Spleen (tissue), 13 donors: ENCODE measurements at regions of chr10 and their contacts with region 1.

Region 1: DNA sequence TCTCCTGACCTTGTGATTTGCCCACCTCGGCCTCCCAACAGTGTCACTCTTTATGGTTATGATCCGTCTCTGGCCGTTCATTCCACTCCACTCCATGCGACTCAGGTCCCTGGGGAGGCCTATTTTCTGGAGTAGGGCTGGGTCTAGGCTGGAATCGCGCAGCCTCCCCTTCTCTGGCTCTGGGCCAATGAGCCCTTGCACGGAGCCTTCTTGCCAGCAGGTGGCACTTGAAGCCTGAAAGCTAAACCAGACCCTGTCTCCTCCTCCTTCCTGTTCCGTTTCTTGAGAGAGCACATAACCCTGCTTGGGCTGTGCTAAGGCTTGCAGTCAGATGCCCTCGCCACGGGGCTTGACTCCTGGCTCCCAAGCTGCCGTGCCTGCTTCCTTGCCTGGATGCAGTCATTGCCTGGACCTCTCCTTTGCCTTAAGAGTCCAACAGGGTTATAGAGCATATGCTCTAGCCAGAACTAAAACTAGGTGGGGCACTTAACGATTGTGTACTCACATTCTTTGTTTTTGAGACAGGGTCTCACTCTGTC is 9.6 kb upstream of the DNAJB12 start:
- DNase-seq: peak; percentile 94
- H3K4me3 ChIP-seq: peak overlapping the region in 2 of 8 donors; percentile 19 to 21
- H3K27ac ChIP-seq: peak overlapping the region; percentile 31 to 79 (median 68)
- H3K4me1 ChIP-seq: peaks cover 6 to 34% (median 14%) of the 10 kb centered on the region in 6 donors
- H3K27me3 ChIP-seq: no peaks in the 10 kb centered on the region
- CTCF ChIP-seq: peak; percentile 93 to 99 (median 96)
- POLR2A ChIP-seq: no peak

Region 2: DNA sequence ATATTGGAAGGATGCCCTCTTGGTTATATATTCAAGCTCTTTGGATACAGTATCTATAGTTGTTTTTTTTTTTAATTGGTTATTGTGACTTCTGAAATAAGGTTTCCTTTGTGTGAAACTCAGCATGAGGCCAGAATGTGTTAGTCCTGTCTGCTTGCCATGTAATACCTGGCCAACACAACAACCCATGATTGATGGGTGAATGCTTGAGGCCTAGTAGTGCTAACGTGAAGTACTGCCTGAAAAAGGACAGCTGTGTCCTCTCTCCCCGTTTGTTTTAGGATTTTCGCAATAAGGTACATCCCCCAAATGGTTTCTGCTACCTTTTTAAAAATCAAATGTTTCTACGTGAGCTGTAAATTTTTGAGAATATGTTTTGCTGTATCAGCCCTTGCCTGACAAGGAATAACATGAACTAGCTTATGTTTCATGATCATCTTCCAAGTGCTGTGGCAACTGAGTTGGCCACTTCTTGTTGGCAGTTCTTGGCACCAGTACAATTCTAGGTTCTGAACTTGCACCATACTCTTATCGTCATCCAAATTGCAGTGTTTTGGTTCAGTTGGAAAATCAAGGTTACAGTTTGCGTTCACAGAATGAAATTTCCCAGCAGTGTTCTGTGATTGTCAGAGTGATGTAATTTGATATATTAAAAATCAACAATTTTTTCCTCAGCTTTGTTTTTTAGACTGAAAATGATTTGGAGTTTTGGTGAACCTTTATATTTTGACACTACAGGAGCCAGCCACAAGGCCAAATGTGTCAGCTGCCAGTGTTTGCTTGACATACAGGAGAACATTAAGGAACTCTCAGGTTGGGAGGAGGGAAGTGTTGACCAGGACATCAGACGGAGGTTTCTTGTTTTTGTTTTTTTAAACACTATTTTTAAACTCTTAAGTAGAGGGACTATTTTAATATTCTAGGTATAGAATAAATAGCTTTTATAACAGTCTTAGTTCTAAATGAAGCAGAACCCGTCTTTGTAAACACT is 134.8 kb before region 1 on chr10:
- intact Hi-C with region 1: no loop called
- DNase-seq: no peak
- H3K4me3 ChIP-seq: no peak overlapping the region
- H3K27ac ChIP-seq: peak overlapping the region in 6 of 8 donors; percentile 39 to 78 (median 46)
- H3K4me1 ChIP-seq: peaks cover 29 to 84% (median 62%) of the 10 kb centered on the region in 6 donors
- H3K27me3 ChIP-seq: no peaks in the 10 kb centered on the region
- CTCF ChIP-seq: no peak
- POLR2A ChIP-seq: no peak

Region 3: DNA sequence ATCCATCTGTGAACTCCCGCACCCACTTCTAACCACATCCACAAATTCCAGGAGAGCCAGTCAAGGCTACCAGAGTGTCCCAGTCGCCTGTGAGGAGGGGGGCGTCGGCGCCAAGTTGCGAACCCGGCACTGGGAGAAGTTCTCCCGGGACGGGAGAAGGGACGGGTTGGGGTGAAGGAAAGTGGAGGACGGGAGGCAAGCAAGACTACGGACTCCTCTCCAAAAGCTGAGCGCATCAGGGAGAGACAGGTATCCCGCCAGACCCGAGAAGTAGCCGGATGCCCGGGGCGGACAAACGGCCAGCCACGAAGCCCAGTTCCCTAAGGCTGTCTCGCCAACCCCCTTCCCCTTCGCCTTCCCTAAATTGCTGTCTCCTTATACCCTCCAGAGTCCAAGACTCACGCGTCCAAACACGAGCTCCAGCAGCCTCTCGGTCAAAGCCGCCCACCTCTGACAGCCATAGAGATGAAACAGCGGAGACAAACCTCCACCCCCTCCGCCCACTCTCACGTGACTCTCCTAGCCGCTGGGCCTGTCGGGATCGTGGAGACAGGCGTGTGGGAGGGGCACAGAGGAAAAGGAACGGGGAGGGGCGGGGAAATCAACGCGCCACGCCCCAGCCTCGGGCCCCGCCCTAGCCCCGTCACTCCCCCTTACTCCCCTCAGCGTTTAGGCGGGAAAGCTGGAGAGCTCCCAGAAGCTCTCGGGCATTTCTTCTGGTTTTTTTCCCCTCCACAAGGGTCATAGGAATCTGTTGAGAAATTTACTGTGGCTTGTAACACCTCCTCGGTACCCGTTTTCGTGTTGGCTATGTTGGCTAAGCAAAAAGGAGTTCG is 261.5 kb after region 1 on chr10 and contains the start of gene MICU1:
- intact Hi-C with region 1: loop called (anchors 10 kb)
- DNase-seq: peak; percentile 99
- H3K4me3 ChIP-seq: peak within 1 kb of the TSS; percentile 73 to 94 (median 86)
- H3K27ac ChIP-seq: peak within 1 kb of the TSS; percentile 67 to 93 (median 87)
- H3K4me1 ChIP-seq: peaks cover 0 to 39% (median 23%) of the 10 kb centered on the region in 6 donors
- H3K27me3 ChIP-seq: no peaks in the 10 kb centered on the region
- CTCF ChIP-seq: peak in 2 of 11 experiments; percentile 18 to 31
- POLR2A ChIP-seq: peak in 2 of 3 donors; percentile 36 to 37
- total RNA-seq, gene MICU1: 44.9 to 58.4 (median 48.5) TPM

Region 4: DNA sequence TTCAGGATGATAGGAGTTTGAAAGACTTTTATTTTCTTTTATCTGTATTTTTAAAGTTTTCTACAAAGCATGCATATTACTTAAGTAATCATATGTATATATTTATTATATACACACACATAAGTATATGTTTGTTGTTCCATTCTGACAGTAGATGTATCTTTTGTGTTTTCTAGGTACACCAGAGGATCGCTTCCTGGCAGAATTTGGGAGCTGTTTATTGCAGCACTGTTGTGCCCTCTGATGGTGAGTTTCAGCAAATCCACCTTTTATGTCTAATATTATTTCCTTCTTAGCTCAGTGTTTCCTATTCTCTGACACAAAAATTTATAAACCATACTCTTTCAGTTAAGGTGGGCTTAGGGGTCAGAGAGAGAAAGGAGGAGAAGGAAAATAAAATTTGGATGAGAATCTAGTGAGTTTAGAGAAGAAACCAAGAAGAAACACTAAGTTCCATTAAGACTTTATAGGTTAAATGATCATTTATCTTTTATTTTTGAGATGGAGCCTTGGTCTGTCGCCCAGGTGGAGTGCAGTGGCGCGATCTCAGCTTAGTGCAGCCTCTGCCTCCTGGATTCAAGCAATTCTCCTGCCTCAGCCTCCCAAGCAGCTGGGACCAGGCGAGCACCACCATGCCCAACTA is 470.0 kb after region 1 on chr10:
- intact Hi-C with region 1: loop called (anchors 2 kb)
- DNase-seq: no peak
- H3K4me3 ChIP-seq: no peak overlapping the region
- H3K27ac ChIP-seq: no peak overlapping the region
- H3K4me1 ChIP-seq: peaks cover 0 to 32% (median 17%) of the 10 kb centered on the region in 6 donors
- H3K27me3 ChIP-seq: no peaks in the 10 kb centered on the region
- CTCF ChIP-seq: peak; percentile 32 to 75 (median 48)
- POLR2A ChIP-seq: no peak

Region 5: GRCh38 chr10:73060738-73061635 is 696.7 kb after region 1 on chr10:
- intact Hi-C with region 1: loop called (anchors 10 kb)
- DNase-seq: no peak
- H3K4me3 ChIP-seq: no peak overlapping the region
- H3K27ac ChIP-seq: no peak overlapping the region
- H3K4me1 ChIP-seq: peaks cover 0 to 14% (median 0%) of the 10 kb centered on the region in 6 donors
- H3K27me3 ChIP-seq: no peaks in the 10 kb centered on the region
- CTCF ChIP-seq: peak in 6 of 11 experiments; percentile 14 to 37 (median 28)
- POLR2A ChIP-seq: no peak